HepG2 (cell line): ENCODE measurements at regions of chr17 and their contacts with region 1.

Region 1: DNA sequence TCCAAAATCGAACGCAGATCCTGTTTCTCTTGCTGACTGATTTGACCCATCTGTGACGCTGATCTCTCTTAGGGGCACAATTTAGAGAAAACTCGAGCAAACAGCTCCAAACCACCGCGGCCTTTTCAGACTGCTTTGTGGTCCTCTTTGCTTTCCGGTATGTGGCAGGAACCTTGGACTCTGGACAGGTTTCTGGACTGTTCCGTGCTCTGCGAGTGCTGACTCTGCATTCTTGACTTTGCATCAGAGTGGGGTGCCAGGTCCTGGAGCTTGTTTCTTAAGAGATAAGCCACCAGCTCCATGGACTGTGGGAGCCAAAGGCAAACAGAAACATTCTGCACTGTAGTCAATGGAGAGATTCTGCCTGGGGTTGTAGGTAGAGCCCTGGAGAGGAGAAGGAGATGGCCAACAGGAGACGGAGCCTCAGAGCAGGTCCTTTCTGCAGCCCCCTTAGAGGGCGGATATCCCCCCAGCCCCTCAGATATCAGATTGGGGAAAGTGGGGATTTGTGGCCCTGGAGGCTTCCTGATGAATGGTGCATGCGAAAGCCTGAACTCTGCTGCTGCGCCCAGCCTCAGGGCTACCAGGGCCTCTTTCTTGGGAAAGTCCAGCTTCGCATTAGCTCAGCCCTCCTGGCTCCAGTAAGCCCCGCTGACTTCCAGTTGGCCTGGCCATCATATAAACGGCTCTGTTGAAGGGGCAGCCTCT is 65.6 kb downstream of the WIPI1 start:
- DNase-seq: peak; percentile 84
- ATAC-seq: peak; percentile 73
- H3K4me3 ChIP-seq: peak overlapping the region in 1 of 3 experiments; percentile 2; a peak in 2 of 6 replicates
- H3K27ac ChIP-seq: peak overlapping the region; percentile 73
- H3K4me1 ChIP-seq: peaks cover 89% of the 10 kb centered on the region
- H3K27me3 ChIP-seq: no peaks in the 10 kb centered on the region
- CTCF ChIP-seq: peak; percentile 9; the same call in 1 of the 2 replicates
- EP300 ChIP-seq: peak in 1 of 2 experiments; percentile 86; a peak in 3 of 4 replicates
- POLR2A ChIP-seq: no peak
- RAD21 ChIP-seq: no peak

Region 2: DNA sequence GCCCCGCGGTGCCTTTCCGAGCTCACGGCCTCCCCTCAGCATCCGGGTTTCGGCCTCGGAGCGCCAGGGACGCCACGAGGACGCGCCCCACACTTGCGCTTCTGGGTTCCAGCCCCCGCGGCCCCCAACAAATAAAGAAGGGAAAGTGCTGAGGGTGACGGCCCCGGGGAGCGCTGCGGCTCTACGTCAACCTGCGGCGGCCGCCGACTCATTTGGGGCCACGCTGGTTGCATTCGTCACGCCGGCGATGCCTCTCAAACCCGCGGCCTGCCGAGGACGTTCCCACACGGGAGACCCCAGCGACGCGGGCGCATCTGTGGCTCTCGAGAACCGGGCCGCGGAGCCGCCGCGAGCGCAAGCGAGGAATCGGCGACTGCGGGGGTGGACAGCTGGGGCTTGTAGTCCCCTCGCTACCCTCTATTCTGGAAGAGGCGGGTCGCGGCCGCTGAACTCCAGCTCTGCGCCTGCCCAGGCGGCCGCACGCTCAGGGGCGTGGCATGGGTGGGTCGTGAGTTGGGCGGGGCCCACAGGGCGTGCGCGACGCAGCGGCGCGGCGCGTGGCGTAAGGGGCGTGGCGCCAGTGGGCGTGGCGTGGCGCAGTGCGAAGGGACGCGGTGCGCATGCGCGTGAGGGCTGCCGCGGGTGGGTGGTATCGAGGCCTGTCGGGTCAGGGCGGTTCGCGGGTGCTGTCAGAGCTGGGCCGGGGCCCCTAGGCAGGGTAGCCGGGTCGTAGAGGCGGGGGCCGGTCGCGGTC is 144.1 kb before region 1 on chr17 and contains the start of gene AMZ2:
- CTCF ChIA-PET with region 1: no interaction called
- POLR2A ChIA-PET with region 1: interaction called, 11 read pairs
- in situ Hi-C with region 1: no loop called
- intact Hi-C with region 1: no loop called
- DNase-seq: peak; percentile 88
- ATAC-seq: peak; percentile 99
- H3K4me3 ChIP-seq: peak within 1 kb of the TSS; percentile 77 to 94 (median 80)
- H3K27ac ChIP-seq: peak within 1 kb of the TSS; percentile 77
- H3K4me1 ChIP-seq: peaks cover 27% of the 10 kb centered on the region
- H3K27me3 ChIP-seq: no peaks in the 10 kb centered on the region; a peak in 2 of 5 replicates
- CTCF ChIP-seq: peak; percentile 29
- EP300 ChIP-seq: no peak
- POLR2A ChIP-seq: peak; percentile 90 to 93
- RAD21 ChIP-seq: peak; percentile 44
- total RNA-seq, gene AMZ2: 86.9 and 99.9 TPM in 2 replicates

Region 3: DNA sequence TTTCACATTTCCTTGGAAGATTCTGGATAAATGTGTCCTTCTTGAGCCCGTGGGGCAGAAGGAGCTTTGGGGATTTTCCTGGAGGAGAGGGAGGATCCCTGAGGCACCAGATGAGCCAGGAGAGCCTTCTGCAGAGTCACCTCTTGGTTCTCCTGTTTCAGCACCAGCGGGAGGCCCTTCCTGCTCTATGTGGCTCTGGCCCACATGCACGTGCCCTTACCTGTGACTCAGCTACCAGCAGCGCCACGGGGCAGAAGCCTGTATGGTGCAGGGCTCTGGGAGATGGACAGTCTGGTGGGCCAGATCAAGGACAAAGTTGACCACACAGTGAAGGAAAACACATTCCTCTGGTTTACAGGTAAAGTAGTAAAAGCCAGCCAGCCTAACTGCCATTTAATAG is 23.3 kb before region 1 on chr17:
- CTCF ChIA-PET with region 1: no interaction called
- POLR2A ChIA-PET with region 1: no interaction called
- in situ Hi-C with region 1: no loop called
- intact Hi-C with region 1: no loop called
- DNase-seq: no peak
- ATAC-seq: peak; percentile 43; the same call in 1 of the 3 replicates
- H3K4me3 ChIP-seq: no peak overlapping the region
- H3K27ac ChIP-seq: no peak overlapping the region
- H3K4me1 ChIP-seq: peaks cover 7% of the 10 kb centered on the region
- H3K27me3 ChIP-seq: no peaks in the 10 kb centered on the region
- CTCF ChIP-seq: no peak
- EP300 ChIP-seq: no peak
- POLR2A ChIP-seq: no peak
- RAD21 ChIP-seq: no peak

Region 4: GRCh38 chr17:68446626-68447041 is 54.9 kb after region 1 on chr17:
- CTCF ChIA-PET with region 1: no interaction called
- POLR2A ChIA-PET with region 1: no interaction called
- in situ Hi-C with region 1: no loop called
- intact Hi-C with region 1: no loop called
- DNase-seq: no peak
- ATAC-seq: no peak
- H3K4me3 ChIP-seq: no peak overlapping the region
- H3K27ac ChIP-seq: no peak overlapping the region
- H3K4me1 ChIP-seq: peaks cover 12% of the 10 kb centered on the region
- H3K27me3 ChIP-seq: no peaks in the 10 kb centered on the region
- CTCF ChIP-seq: no peak
- EP300 ChIP-seq: no peak
- POLR2A ChIP-seq: no peak
- RAD21 ChIP-seq: no peak